Right ventricle myocardium inferior (tissue), 1 donor: ENCODE measurements at regions of chr13 and their contacts with region 1.

Region 1: DNA sequence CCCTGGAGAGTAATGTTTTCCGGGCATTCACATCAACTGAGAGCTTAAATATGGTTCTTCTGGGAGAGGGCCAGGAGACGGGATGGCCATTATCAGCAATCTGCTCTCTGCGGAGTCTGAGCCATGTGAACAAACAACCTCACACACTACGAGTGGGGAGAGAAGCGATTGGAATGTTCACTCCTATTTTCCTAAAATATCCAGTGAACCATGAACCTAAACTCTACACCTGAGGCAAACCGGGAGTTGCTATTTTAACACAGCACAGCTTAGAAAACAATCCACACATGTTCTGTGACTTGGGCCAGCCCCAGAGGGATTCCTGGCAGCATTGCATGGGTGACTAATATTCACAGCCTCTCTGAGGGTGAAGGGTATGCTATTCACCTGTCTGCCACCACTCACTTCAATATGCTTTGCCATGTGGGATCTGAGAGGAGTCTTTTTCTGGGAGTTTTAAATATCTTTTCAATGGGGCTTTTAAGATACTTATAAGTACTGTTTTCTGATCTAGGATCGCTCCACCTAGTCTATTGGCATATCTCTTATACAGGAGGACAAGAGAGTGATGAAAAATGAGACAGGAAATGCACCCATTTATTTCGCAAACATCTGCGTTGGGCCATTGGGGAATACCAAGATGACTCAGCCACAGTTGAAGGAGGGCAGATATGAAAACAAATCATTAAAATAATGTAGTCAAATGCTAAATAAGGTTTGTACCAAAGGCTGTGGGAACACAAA is 72.6 kb upstream of the SERP2 start:
- DNase-seq: no peak
- ATAC-seq: peak; percentile 77

Region 2: DNA sequence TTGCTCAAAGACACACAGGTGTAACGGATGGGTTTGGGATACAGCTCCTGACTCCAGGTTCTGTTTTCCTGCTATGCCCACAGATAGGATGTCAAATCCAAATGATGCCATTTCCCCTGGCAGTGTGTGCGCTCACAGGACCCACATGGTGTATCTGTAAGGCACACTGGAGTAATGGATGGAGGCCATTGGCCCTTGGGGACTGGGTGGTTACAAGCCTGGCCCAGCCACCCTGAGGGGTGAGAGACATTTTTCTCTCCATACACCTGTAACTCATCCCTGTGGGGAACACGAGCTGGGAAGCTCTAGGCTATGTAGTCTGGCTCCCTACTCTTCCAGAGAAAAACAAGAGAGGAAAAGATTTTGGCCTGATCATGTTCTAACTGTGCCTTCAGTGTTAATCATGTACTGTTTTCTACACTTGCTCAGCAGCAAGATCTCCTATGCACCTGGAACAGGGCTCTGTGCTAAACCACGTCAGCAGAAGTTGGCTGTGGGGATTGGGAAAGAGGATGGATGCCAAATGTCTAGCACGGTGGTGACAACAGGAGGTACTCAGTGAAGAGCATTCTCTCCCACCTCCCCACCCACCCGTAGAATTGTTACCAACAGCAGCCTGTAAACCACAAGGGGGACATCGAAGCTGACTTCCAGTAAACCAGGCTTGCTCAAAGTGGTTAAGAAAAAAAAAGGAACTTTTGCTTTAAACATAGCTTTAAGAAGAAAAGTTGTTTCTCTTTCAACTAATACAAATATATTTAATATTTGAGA is 184.3 kb before region 1 on chr13:
- intact Hi-C with region 1: loop called (anchors 5 kb)
- DNase-seq: no peak
- ATAC-seq: peak; percentile 95

Region 3: DNA sequence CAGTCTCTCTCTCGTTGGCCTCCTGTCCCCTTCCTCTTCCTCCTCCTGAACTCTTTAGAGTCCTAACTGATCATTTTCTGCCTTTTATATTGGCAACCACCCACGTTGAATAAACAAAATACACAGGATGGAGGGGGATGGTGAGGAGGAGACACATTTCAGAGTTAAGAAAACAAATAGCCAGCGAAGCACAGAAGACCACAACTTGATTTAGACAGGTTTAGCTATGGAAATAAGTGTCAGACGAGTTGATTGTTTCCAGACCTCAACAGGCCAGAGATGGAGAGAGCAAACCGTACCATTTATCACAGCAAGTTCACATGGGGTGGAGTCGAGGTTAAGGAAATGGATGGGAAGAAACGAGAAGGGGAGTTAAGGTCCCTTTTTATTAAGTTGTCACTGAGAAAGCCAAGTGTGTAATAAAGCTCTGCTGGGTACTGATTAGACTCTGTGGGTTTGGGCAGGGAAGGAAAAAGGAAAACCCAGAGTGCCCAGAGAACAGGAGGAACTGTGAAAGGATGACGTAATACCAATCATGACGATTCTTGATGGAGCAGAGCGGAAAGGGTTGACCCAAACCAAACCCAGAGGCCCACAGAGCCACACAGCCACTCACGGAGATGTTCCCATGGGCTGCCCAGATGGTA is 61.5 kb after region 1 on chr13:
- intact Hi-C with region 1: no loop called
- DNase-seq: no peak
- ATAC-seq: no peak

Region 4: GRCh38 chr13:44373601-44374348 is 72.7 kb after region 1 on chr13 and contains the start of gene SERP2:
- intact Hi-C with region 1: loop called (anchors 5 kb)
- DNase-seq: peak; percentile 60
- ATAC-seq: peak; percentile 79
- total RNA-seq, gene SERP2: 15.7 TPM